Activated naive CD4-positive, alpha-beta T cell treated with anti-CD3 and anti-CD28 coated beads, Interleukin-2, amount 10 ng/mL, durations not matched to agents 7 days and 5 days (primary cell): ENCODE measurements at regions of chr12 and their contacts with region 1.

Region 1: DNA sequence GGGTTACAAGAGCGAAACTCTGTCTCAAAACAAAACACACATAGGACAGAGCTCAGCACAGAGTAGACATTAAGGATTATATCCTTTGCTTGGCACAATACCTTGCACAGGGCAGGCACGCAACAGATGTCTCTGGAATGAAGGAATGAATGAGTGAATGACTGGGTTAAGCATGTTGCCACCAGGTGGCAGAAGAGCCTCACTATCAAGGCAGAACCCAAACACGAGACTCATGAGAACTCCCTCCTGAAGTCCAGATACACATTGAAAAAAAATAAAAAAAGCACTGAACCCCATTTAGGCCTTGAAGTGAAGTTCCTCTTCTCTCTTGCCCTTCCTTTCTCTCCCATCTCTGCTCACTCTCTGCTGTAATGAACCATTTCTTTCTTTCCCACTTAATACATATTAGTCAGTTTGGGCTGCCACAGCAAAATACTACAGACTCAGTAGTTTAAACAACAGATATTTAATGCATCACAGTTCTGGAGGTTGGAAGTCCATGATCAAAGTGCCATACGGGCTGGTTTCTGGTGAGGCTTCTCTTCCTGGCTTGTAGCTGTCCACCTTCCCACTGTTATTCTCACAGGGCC is 26.6 kb upstream of the LTA4H start:
- DNase-seq: peak; percentile 86
- H3K4me3 Mint-ChIP-seq: no peak overlapping the region
- H3K27ac Mint-ChIP-seq: no peak overlapping the region
- H3K4me1 Mint-ChIP-seq: peaks cover 30% of the 10 kb centered on the region
- H3K27me3 Mint-ChIP-seq: no peaks in the 10 kb centered on the region

Region 2: DNA sequence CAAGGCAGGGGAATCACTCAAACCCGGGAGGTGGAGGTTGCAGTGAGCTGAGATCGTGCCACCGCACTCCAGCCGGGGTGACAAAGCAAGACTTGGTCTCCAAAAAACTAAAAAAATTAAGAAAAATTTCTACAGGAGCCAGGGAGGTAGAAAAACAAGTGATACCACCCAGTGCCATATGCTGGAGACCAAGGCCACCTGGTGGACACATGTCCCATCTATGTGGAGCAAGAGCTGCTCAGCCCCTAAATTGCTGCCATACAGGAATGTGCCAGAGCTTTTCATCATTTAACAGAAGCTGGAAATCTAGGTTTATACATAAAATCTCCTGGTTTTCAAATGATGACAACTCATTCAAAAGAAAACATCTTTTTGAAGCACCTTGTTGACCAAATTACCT is 70.9 kb after region 1 on chr12:
- CTCF ChIA-PET with region 1: interaction called, 13 read pairs
- DNase-seq: peak; percentile 60
- H3K4me3 Mint-ChIP-seq: no peak overlapping the region
- H3K27ac Mint-ChIP-seq: no peak overlapping the region
- H3K4me1 Mint-ChIP-seq: peaks cover 17% of the 10 kb centered on the region
- H3K27me3 Mint-ChIP-seq: peaks cover 39% of the 10 kb centered on the region